Thyroid gland (tissue), 4 donors: ENCODE measurements at regions of chr15 and their contacts with region 1.

Region 1: GRCh38 chr15:52326756-52327155 is 31.2 kb upstream of the MYO5C start:
- DNase-seq: no peak
- H3K4me3 ChIP-seq: no peak overlapping the region
- H3K27ac ChIP-seq: peak overlapping the region in 2 of 3 donors; percentile 25 to 49
- H3K4me1 ChIP-seq: peaks cover 7 to 12% of the 10 kb centered on the region in 2 donors
- H3K27me3 ChIP-seq: no peaks in the 10 kb centered on the region
- CTCF ChIP-seq: no peak
- POLR2A ChIP-seq: no peak

Region 2: DNA sequence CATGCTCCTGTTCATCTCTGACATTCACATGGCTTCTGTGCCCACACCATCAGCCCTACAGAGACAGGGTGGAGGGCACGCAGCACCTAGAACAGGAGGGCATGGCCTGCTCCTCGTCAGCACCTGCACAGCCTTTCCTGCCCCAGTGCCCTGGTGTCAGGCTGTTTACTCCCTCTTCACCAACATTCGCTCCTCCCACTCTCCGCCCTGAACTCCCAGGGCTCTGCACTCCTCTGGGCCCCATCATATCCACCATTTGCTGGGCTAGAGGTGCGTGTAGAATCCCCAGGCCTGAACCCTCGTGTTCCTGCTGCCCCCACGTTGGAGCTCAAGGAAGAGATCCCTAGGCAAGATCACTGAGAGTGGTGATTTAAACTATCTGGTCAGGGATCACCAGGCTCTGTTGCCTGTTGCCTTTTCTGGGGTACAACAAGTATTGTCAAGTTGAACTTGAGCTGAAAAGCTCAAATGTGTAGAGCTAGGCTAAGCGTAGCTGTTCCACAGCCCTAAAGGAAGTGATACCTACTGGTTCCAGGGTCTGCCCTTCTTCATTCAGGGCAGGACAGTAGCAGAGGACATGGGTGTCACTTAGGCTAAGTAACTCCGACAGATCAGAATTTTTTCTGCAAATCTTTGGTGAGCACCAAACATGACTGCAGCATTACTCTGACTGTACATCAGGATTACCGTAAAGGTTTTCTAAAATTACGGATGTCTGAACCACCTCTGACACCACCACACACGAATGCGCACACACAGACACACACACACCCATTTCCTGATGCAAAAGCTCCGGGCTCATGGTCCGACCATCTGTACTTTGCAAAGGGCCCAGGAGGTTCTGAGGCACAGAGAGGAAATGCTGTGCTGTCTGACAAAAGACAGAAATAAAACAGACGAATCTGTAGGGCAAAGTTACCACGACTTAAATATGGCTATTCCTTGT is 91.9 kb before region 1 on chr15:
- intact Hi-C with region 1: no loop called
- DNase-seq: no peak
- H3K4me3 ChIP-seq: no peak overlapping the region
- H3K27ac ChIP-seq: no peak overlapping the region
- H3K4me1 ChIP-seq: no peaks in the 10 kb centered on the region
- H3K27me3 ChIP-seq: no peaks in the 10 kb centered on the region
- CTCF ChIP-seq: no peak
- POLR2A ChIP-seq: no peak

Region 3: GRCh38 chr15:52256366-52256765 is 70.4 kb before region 1 on chr15:
- intact Hi-C with region 1: loop called (anchors 10 kb)
- DNase-seq: peak; percentile 75 to 78
- H3K4me3 ChIP-seq: no peak overlapping the region
- H3K27ac ChIP-seq: peak overlapping the region in 2 of 3 donors; percentile 67 to 74
- H3K4me1 ChIP-seq: peaks cover 11 to 28% of the 10 kb centered on the region in 2 donors
- H3K27me3 ChIP-seq: no peaks in the 10 kb centered on the region
- CTCF ChIP-seq: peak; percentile 55 to 83 (median 69)
- POLR2A ChIP-seq: no peak

Region 4: GRCh38 chr15:52579852-52580251 is 253.1 kb after region 1 on chr15:
- intact Hi-C with region 1: no loop called
- DNase-seq: no peak
- H3K4me3 ChIP-seq: no peak overlapping the region
- H3K27ac ChIP-seq: no peak overlapping the region
- H3K4me1 ChIP-seq: no peaks in the 10 kb centered on the region
- H3K27me3 ChIP-seq: no peaks in the 10 kb centered on the region
- CTCF ChIP-seq: no peak
- POLR2A ChIP-seq: no peak